Breast epithelium (tissue), 4 donors: ENCODE measurements at regions of chr12 and their contacts with region 1.

Region 1: DNA sequence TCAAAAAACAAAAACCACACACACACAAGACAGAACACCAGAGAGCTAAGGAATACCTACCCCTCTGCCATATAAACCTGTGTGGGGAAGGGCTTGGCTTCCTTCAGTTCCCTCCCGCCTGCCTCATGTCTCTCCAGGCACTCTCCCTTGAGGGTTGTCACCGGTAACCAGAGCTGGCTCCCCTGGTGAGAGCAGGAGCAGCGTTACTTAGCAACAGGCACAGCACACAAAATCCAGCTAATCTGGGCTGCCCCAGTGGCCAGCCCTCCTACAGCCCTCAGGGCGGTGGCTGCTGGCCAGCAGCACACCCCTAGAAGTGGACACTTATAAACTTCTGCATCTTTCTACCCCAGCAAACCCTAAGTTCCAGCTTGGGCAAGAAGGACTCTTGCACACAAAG is 21.6 kb upstream of the NR4A1 start:
- DNase-seq: no peak
- H3K4me3 ChIP-seq: no peak overlapping the region
- H3K27ac ChIP-seq: no peak overlapping the region
- H3K4me1 ChIP-seq: peaks cover 6 to 8% of the 10 kb centered on the region in 2 donors
- H3K27me3 ChIP-seq: no peaks in the 10 kb centered on the region
- CTCF ChIP-seq: no peak
- POLR2A ChIP-seq: no peak

Region 2: GRCh38 chr12:51984657-51985056 is 45.0 kb before region 1 on chr12:
- intact Hi-C with region 1: loop called (anchors 2 kb)
- DNase-seq: no peak
- H3K4me3 ChIP-seq: no peak overlapping the region
- H3K27ac ChIP-seq: peak overlapping the region in 1 of 2 donors; percentile 28
- H3K4me1 ChIP-seq: no peaks in the 10 kb centered on the region
- H3K27me3 ChIP-seq: no peaks in the 10 kb centered on the region
- CTCF ChIP-seq: no peak
- POLR2A ChIP-seq: no peak

Region 3: GRCh38 chr12:52082988-52083637 is 53.4 kb after region 1 on chr12:
- intact Hi-C with region 1: loop called (anchors 5 kb)
- DNase-seq: peak in 1 of 2 donors; percentile 40
- H3K4me3 ChIP-seq: no peak overlapping the region
- H3K27ac ChIP-seq: peak overlapping the region in 1 of 2 donors; percentile 89
- H3K4me1 ChIP-seq: peaks cover 0 to 15% of the 10 kb centered on the region in 2 donors
- H3K27me3 ChIP-seq: no peaks in the 10 kb centered on the region
- CTCF ChIP-seq: peak; percentile 95 to 96 (median 96)
- POLR2A ChIP-seq: no peak